Esophagus squamous epithelium (tissue), 5 donors: ENCODE measurements at regions of chr4 and their contacts with region 1.

Region 1: DNA sequence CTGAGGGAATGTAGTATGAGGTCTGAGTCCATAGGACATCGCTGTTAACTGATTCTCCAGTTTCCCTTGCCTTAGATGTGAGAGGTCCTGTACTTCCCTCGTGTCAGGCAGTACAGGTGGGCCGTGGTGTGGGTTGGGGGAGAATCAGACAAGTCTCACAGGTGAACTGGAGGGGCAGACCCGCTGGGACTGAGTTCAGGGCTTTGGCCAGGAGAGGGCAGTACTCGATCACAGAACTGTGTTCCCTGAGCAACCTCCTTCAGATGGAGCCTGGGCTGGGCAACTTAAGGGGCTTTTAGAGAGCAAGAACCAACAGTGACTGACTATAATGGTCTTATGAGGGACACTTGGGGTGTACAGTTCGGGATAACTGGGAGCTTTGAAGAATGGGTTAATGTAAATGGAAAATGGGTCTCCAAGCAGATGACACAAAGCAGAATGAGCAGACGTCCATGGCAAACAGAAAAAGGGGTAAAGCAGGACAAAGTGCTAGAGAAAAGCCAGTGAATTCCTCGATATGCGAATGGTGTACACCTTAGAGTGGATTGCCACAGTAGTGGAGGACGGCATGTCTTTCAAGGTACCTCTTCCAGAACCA is 83.6 kb downstream of the CCNG2 start:
- DNase-seq: no peak
- H3K4me3 ChIP-seq: no peak overlapping the region
- H3K27ac ChIP-seq: no peak overlapping the region
- H3K4me1 ChIP-seq: no peaks in the 10 kb centered on the region
- H3K27me3 ChIP-seq: peaks cover 0 to 42% (median 0%) of the 10 kb centered on the region in 4 donors
- CTCF ChIP-seq: peak; percentile 33 to 82 (median 73)
- POLR2A ChIP-seq: no peak

Region 2: DNA sequence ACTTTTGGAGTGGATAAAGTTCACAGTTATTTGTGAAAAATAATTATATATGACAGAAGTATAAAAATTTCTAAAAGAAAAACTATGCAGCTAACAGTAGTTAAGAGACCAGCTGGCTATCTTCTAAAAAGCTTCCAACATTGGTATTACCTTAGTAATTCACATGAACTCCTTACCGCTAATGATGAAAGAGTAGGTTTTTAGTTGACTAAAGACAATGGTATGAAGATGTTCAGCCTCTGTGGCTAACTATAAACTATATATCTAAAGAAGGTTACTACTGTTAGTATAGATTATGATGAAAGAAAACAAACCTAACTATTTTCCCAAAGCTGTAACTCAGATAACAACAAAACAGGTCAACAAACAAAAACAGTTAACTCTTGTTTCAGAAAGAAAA is 175.2 kb before region 1 on chr4:
- intact Hi-C with region 1: no loop called
- DNase-seq: no peak
- H3K4me3 ChIP-seq: no peak overlapping the region
- H3K27ac ChIP-seq: no peak overlapping the region
- H3K4me1 ChIP-seq: peaks cover 0 to 38% (median 5%) of the 10 kb centered on the region in 3 donors
- H3K27me3 ChIP-seq: no peaks in the 10 kb centered on the region
- CTCF ChIP-seq: no peak
- POLR2A ChIP-seq: no peak

Region 3: DNA sequence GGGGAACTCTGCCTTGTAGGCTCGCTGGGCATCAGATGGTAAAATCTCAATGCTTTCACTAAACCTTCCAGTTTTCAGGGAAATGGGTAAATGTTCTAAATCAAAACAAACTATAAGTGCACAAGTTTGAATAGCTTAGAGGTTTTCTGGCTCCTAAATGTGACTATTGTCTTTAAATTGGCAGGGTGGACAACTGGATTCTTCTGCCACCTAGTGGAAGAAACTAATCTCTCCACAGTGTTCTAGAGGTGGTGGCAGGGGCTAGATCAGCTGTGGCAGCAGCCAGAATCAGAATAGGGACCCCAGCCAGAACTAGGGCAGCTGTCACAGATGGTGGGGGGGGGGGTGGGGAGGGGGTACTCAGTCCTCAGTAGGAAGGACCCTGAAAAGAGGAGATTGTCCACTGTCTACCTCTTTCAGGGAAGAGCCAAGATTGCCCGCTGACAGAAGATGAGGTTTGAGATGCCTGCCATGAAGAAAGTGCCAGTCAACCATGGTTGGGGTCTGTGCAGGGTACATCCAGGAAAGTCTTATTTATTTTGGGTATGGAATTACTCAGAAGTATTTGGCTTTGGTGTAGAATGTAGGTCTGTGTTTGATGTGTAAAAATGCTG is 117.9 kb after region 1 on chr4:
- intact Hi-C with region 1: loop called (anchors 5 kb)
- DNase-seq: no peak
- H3K4me3 ChIP-seq: no peak overlapping the region
- H3K27ac ChIP-seq: no peak overlapping the region
- H3K4me1 ChIP-seq: peaks cover 0 to 7% (median 0%) of the 10 kb centered on the region in 3 donors
- H3K27me3 ChIP-seq: peaks cover 0 to 36% (median 0%) of the 10 kb centered on the region in 4 donors
- CTCF ChIP-seq: peak in 5 of 6 experiments; percentile 43 to 67 (median 60)
- POLR2A ChIP-seq: no peak

Region 4: GRCh38 chr4:77652237-77652897 is 411.8 kb after region 1 on chr4:
- intact Hi-C with region 1: no loop called
- DNase-seq: no peak
- H3K4me3 ChIP-seq: no peak overlapping the region
- H3K27ac ChIP-seq: no peak overlapping the region
- H3K4me1 ChIP-seq: no peaks in the 10 kb centered on the region
- H3K27me3 ChIP-seq: no peaks in the 10 kb centered on the region
- CTCF ChIP-seq: no peak
- POLR2A ChIP-seq: no peak